ENCODE measurements at regions of chr4 and their contacts with region 1.

Region 1: GRCh38 chr4:54099748-54100574 is at the start of gene GSX2:
- DNase-seq: no peak
- ATAC-seq: peak; percentile 28
- H3K4me3 Mint-ChIP-seq: peak within 1 kb of the TSS; percentile 59
- H3K27ac Mint-ChIP-seq: no peak within 1 kb of the TSS
- H3K4me1 Mint-ChIP-seq: peaks cover 57% of the 10 kb centered on the region
- H3K27me3 Mint-ChIP-seq: peaks cover 89% of the 10 kb centered on the region
- CTCF ChIP-seq: no peak
- total RNA-seq, gene GSX2: not detected

Region 2: GRCh38 chr4:54064295-54065111 is 35.5 kb before region 1 on chr4 and contains the start of gene CHIC2:
- CTCF ChIA-PET with region 1: no interaction called
- POLR2A ChIA-PET with region 1: no interaction called
- intact Hi-C with region 1: loop called (anchors 5 kb)
- DNase-seq: peak; percentile 97
- ATAC-seq: peak; percentile 88
- H3K4me3 Mint-ChIP-seq: peak within 1 kb of the TSS; percentile 85
- H3K27ac Mint-ChIP-seq: peak within 1 kb of the TSS; percentile 96
- H3K4me1 Mint-ChIP-seq: peaks cover 38% of the 10 kb centered on the region
- H3K27me3 Mint-ChIP-seq: no peaks in the 10 kb centered on the region
- CTCF ChIP-seq: no peak
- total RNA-seq, gene CHIC2: 16.8 to 17.5 TPM

Region 3: GRCh38 chr4:54228056-54228527 is 128.1 kb after region 1 on chr4:
- CTCF ChIA-PET with region 1: interaction called, 27 read pairs
- POLR2A ChIA-PET with region 1: interaction called, 3 read pairs
- intact Hi-C with region 1: loop called (anchors 5 kb)
- DNase-seq: peak; percentile 74
- ATAC-seq: peak; percentile 71
- H3K4me3 Mint-ChIP-seq: no peak overlapping the region
- H3K27ac Mint-ChIP-seq: no peak overlapping the region
- H3K4me1 Mint-ChIP-seq: peaks cover 35% of the 10 kb centered on the region
- H3K27me3 Mint-ChIP-seq: peaks cover 87% of the 10 kb centered on the region
- CTCF ChIP-seq: peak; percentile 84

Measured in activated CD8-positive, alpha-beta T cell treated with anti-CD3 and anti-CD28 coated beads for 36 hours (primary cell).